GM12878 (cell line): ENCODE measurements at regions of chr6 and their contacts with region 1.

Region 1: GRCh38 chr6:30541515-30542403 is 14.5 kb downstream of the GNL1 start:
- DNase-seq: peak; percentile 62
- ATAC-seq: peak; percentile 88
- H3K4me3 ChIP-seq: peak overlapping the region; percentile 60
- H3K27ac ChIP-seq: no peak overlapping the region
- H3K4me1 ChIP-seq: peaks cover 7% of the 10 kb centered on the region; the same call in 1 of the 2 replicates
- H3K27me3 ChIP-seq: no peaks in the 10 kb centered on the region
- CTCF ChIP-seq: peak; percentile 94 to 99 (median 96)
- EP300 ChIP-seq: no peak
- POLR2A ChIP-seq: no peak
- RAD21 ChIP-seq: peak; percentile 68

Region 2: DNA sequence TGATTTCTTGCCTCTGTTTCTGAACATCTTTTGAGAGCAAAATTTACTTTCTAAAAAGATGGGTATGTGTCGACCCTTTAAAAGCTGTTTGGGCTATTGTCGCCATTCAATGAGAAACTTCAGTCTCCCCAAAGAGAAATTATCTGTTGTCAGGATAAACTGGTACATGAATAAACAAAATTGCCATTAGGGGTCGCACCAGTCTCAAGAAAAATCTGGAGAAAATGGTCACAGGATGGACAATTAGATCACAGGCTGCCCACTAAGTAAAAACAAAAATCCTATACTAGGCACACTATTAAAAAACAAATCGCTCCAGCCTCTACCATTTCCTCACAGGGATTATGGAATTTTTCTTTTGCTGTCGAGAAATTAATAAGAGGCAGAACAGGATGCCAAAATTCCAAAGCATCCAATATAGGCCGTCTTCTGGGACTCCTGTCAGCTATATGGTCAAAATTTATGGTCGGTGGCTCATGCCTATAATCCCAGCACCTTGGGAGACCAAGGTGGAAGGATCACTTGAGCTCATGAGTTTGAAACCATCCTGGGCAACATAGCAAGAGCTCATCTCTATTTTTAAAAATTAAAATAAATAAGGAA is 58.0 kb before region 1 on chr6:
- CTCF ChIA-PET with region 1: interaction called, 480 read pairs
- POLR2A ChIA-PET with region 1: interaction called, 15 read pairs
- RAD21 ChIA-PET with region 1: interaction called, 159 read pairs
- SMC1A ChIA-PET with region 1: interaction called, 221 read pairs
- in situ Hi-C with region 1: no loop called
- intact Hi-C with region 1: loop called (anchors 1 kb)
- DNase-seq: peak; percentile 37
- ATAC-seq: peak; percentile 48
- H3K4me3 ChIP-seq: no peak overlapping the region
- H3K27ac ChIP-seq: no peak overlapping the region
- H3K4me1 ChIP-seq: peaks cover 12% of the 10 kb centered on the region; the same call in 1 of the 2 replicates
- H3K27me3 ChIP-seq: peaks cover 2 to 8% of the 10 kb centered on the region in 2 experiments; a peak in 3 of 4 replicates
- CTCF ChIP-seq: peak; percentile 47 to 73 (median 56); a peak in 5 of 6 replicates
- EP300 ChIP-seq: no peak
- POLR2A ChIP-seq: no peak
- RAD21 ChIP-seq: peak; percentile 90

Region 3: DNA sequence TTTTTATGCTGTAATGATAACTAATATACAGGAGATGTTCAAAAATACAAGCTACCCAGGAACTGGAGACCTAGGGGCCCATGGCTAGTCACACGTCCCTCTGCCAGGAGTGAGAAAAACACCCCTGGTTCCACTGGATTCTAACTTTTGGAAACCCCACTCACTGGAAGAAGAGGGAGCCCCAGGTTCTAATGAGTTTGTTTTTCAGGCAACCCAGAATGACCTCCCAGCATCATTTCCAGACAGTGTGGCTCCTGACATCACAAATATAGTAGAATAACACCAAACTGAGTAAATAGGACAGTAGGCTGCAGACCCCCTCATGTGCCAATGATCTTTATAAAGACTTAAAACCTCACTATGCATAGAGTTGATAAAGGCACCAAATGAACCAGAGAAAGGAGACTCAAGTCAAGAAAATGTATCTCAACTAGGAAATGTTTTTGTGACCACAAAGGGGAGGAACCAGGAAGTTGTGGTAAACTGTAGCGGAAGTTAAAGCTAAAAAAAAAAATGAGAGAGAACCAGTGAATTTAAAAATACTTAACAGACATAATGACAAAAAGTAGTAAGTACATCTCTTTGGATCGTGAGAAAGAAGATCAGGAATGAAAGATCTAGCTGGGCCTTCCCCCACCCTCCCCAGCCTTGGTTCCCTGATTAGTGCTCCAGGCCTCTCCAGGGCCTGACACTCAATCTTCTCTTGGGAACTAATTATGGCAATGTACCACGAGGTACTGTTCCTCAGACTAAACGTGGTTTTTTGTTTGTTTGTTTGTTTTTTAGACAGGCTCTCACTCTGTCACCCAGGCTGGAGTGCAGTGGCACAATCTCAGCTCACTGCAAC is 32.6 kb before region 1 on chr6:
- CTCF ChIA-PET with region 1: interaction called, 22 read pairs
- POLR2A ChIA-PET with region 1: no interaction called
- RAD21 ChIA-PET with region 1: interaction called, 5 read pairs
- SMC1A ChIA-PET with region 1: interaction called, 7 read pairs
- in situ Hi-C with region 1: no loop called
- intact Hi-C with region 1: no loop called
- DNase-seq: peak; percentile 79
- ATAC-seq: peak; percentile 76
- H3K4me3 ChIP-seq: peak overlapping the region; percentile 31
- H3K27ac ChIP-seq: peak overlapping the region; percentile 97
- H3K4me1 ChIP-seq: peaks cover 53% of the 10 kb centered on the region
- H3K27me3 ChIP-seq: no peaks in the 10 kb centered on the region
- CTCF ChIP-seq: no peak
- EP300 ChIP-seq: no peak
- POLR2A ChIP-seq: no peak
- RAD21 ChIP-seq: no peak

Region 4: DNA sequence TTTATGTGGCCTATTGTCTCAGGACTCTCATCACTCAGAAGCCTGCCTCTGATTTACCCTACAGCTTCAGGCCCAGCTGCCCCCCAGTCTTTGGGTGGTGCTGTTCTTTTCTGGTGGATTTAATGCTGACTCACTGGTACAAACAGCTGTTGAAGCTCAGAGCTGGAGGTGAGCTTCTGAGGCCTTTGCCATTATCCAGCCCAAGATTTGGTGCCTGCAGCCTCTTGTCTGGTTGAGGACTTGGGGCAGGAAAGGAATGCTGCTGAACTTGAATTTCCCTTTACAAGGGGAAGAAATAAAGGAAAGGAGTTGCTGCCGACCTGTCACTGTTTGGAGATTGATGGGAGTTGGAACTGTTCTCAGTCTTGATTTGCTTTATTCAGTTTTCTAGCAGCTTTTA is 49.2 kb after region 1 on chr6:
- CTCF ChIA-PET with region 1: interaction called, 188 read pairs
- POLR2A ChIA-PET with region 1: interaction called, 3 read pairs
- RAD21 ChIA-PET with region 1: interaction called, 21 read pairs
- SMC1A ChIA-PET with region 1: interaction called, 35 read pairs
- in situ Hi-C with region 1: no loop called
- intact Hi-C with region 1: loop called (anchors 2 kb)
- DNase-seq: no peak
- ATAC-seq: no peak
- H3K4me3 ChIP-seq: no peak overlapping the region
- H3K27ac ChIP-seq: no peak overlapping the region
- H3K4me1 ChIP-seq: no peaks in the 10 kb centered on the region
- H3K27me3 ChIP-seq: no peaks in the 10 kb centered on the region
- CTCF ChIP-seq: no peak
- EP300 ChIP-seq: no peak
- POLR2A ChIP-seq: no peak
- RAD21 ChIP-seq: no peak

Region 5: DNA sequence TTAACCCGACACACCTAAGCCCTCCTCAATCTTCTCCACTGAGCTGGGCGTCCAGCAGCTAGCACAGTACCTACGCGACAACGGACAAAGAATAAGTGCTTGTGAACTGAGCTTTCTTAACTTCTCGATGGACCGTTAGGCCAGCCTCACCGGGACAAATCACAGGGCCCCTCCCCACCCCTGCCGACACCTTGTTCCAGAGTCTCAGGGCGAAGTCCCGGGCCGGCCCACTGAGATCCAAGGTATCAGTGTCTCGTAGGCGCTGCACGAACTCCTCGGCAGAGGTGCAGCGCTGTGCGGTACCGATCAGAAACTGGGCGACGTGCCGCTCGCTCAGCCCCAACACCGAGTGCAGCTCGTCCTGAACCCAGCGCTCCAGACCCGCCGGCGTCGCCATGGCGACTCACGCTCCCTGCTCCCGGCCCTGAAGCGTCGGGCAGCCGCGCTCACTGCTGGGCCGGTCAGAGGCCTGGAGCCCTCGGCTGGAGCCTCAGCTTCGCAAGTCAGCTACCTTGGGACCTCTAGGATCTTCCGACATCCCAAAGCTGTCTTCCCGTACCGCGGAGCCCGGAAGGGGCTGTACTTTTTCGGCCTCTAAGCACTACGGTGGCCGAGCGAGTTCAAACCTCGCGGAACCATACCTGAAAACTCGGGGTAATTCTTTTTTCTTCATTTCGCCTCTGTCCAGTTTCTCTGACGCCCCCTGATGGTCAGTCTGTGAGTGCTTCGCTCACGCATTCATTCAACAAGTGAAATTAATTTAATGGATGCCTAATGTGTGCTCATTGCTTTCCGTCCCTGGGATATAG is 130.9 kb after region 1 on chr6 and contains the start of gene DHX16:
- CTCF ChIA-PET with region 1: interaction called, 67 read pairs
- POLR2A ChIA-PET with region 1: no interaction called
- RAD21 ChIA-PET with region 1: interaction called, 6 read pairs
- SMC1A ChIA-PET with region 1: interaction called, 5 read pairs
- in situ Hi-C with region 1: no loop called
- intact Hi-C with region 1: loop called (anchors 5 kb)
- DNase-seq: peak; percentile 90
- ATAC-seq: peak; percentile 90
- H3K4me3 ChIP-seq: peak within 1 kb of the TSS; percentile 99
- H3K27ac ChIP-seq: peak within 1 kb of the TSS; percentile 79
- H3K4me1 ChIP-seq: peaks cover 8% of the 10 kb centered on the region
- H3K27me3 ChIP-seq: no peaks in the 10 kb centered on the region
- CTCF ChIP-seq: peak; percentile 77 to 93 (median 88); a peak in 5 of 6 replicates
- EP300 ChIP-seq: no peak
- POLR2A ChIP-seq: peak; percentile 70
- RAD21 ChIP-seq: peak; percentile 64
- polyA plus RNA-seq, gene DHX16: 10.1 to 17.7 TPM